ENCODE measurements at regions of chr6 and their contacts with region 1.

Region 1: DNA sequence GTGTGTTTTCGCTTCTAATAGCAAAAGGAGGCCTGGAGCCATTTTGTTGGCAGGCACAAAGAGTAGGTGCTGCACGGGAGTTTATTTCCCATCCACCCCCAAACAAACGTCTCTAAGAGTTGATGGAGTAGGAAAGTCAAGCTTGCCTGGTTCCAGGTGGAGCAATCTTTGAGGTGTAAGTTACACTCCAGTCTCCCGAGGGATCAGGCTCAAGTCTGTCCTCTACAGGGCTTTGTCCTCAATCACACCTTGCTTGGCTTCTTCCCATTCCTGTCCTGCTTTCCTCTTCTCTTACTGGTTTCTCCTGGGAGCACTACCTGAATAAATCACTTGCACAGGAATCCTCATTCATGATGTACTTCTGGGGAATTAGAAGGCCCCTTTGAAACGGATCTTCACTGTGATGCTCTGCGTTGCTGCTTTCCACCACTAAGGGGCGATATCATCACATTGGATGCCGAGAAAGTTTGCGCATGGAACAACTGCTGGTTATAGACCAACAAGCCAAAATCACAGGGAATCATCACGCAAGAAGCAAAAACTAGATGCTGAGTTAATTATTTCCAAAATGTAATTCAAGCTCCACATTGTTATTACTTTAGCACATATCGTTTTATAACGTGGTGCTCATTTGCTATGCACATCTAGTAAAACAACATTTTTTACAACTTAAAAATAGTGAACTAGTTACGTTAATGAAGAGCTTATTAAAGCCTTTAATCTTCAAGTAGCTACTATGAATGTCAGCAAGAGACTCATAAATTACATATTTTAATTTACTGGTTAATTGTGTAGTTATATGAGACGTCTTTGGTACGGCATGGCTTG is 156.8 kb downstream of the DNAH8 start:
- DNase-seq: peak; percentile 46 to 77 (median 54)
- H3K4me3 ChIP-seq: no peak overlapping the region
- H3K27ac ChIP-seq: no peak overlapping the region
- H3K4me1 ChIP-seq: no peaks in the 10 kb centered on the region
- H3K27me3 ChIP-seq: peaks cover 13% of the 10 kb centered on the region
- CTCF ChIP-seq: peak; percentile 76 to 87 (median 83)
- POLR2A ChIP-seq: no peak

Region 2: GRCh38 chr6:38836585-38836984 is 35.4 kb before region 1 on chr6:
- intact Hi-C with region 1: no loop called
- DNase-seq: no peak
- H3K4me3 ChIP-seq: no peak overlapping the region
- H3K27ac ChIP-seq: no peak overlapping the region
- H3K4me1 ChIP-seq: no peaks in the 10 kb centered on the region
- H3K27me3 ChIP-seq: no peaks in the 10 kb centered on the region
- CTCF ChIP-seq: no peak
- POLR2A ChIP-seq: no peak

Region 3: DNA sequence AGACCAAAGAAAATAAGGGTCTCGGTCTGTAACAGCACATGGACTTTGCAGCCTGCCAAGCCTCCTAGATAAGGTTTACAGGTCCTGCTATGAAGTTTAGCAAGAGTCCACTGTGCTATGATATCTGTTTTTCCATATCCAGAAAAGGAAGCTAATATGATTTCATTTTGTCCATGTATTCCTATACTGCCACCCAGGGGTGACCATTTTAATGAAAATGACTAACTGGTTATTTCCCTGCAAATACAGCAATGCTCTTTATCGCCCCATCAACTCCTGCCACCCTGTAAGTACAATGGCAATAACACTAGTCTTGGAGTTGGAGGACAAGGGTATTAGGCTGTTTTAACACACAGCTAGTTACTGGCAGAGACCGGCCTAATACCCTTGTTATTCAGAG is 61.5 kb after region 1 on chr6:
- intact Hi-C with region 1: loop called in 1 of 2 experiments (anchors 5 kb)
- DNase-seq: peak in 2 of 7 donors; percentile 11 to 16
- H3K4me3 ChIP-seq: no peak overlapping the region
- H3K27ac ChIP-seq: no peak overlapping the region
- H3K4me1 ChIP-seq: no peaks in the 10 kb centered on the region
- H3K27me3 ChIP-seq: no peaks in the 10 kb centered on the region
- CTCF ChIP-seq: peak; percentile 21 to 45 (median 38)
- POLR2A ChIP-seq: no peak

Region 4: DNA sequence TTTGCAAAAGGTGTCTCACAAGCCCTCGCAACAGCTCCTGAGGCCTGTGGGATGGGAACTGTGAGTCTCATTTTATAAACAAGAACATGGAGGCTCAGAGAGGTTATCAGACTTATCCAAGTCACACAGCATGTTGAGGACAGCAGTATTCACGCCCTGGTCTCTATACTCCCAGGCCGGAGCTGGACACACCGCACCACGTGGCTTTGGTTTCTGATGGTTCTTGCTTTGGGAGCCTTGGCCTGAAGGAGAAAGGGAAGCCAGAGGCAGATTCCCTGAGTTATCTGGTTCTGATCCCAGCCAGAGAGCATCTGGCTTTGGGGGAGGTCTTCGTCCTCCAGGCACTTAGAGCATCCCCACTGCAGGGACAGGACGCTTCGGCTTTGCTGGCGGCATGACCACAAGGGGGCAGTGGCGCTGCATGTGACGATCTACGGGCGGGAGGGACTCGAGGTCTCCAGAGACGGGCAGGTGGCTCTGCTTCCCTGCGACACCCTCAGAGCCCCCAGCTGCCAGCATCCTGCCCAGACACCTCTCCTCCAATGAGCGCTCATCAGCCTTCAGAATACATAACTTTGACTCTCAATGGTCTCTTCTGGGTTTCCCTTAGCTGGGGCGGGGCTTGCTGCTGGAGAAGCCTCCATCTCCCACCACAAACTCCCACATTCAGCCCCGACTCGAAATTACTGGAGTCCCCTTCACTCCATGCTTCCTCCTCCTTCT is 294.4 kb after region 1 on chr6:
- intact Hi-C with region 1: loop called in 1 of 2 experiments (anchors 10 kb)
- DNase-seq: peak; percentile 69 to 85 (median 82)
- H3K4me3 ChIP-seq: no peak overlapping the region
- H3K27ac ChIP-seq: no peak overlapping the region
- H3K4me1 ChIP-seq: no peaks in the 10 kb centered on the region
- H3K27me3 ChIP-seq: no peaks in the 10 kb centered on the region
- CTCF ChIP-seq: peak; percentile 86 to 92 (median 90)
- POLR2A ChIP-seq: no peak

Region 5: GRCh38 chr6:39302669-39303424 is 430.9 kb after region 1 on chr6:
- intact Hi-C with region 1: loop called (anchors 5 to 10 kb)
- DNase-seq: peak; percentile 76 to 93 (median 86)
- H3K4me3 ChIP-seq: no peak overlapping the region
- H3K27ac ChIP-seq: no peak overlapping the region
- H3K4me1 ChIP-seq: peaks cover 0 to 3% of the 10 kb centered on the region in 2 donors
- H3K27me3 ChIP-seq: no peaks in the 10 kb centered on the region
- CTCF ChIP-seq: peak; percentile 77 to 96 (median 92)
- POLR2A ChIP-seq: no peak

Region 6: GRCh38 chr6:39309942-39310531 is 438.1 kb after region 1 on chr6:
- intact Hi-C with region 1: loop called (anchors 5 to 10 kb)
- DNase-seq: peak; percentile 73 to 85 (median 79)
- H3K4me3 ChIP-seq: no peak overlapping the region
- H3K27ac ChIP-seq: no peak overlapping the region
- H3K4me1 ChIP-seq: peaks cover 0 to 7% of the 10 kb centered on the region in 2 donors
- H3K27me3 ChIP-seq: peaks cover 29% of the 10 kb centered on the region
- CTCF ChIP-seq: peak; percentile 83 to 93 (median 90)
- POLR2A ChIP-seq: no peak

Region 7: GRCh38 chr6:39320363-39320984 is 448.5 kb after region 1 on chr6:
- intact Hi-C with region 1: no loop called
- DNase-seq: no peak
- H3K4me3 ChIP-seq: no peak overlapping the region
- H3K27ac ChIP-seq: no peak overlapping the region
- H3K4me1 ChIP-seq: no peaks in the 10 kb centered on the region
- H3K27me3 ChIP-seq: no peaks in the 10 kb centered on the region
- CTCF ChIP-seq: no peak
- POLR2A ChIP-seq: no peak